ENCODE measurements at regions of chr15 and their contacts with region 1.

Region 1: DNA sequence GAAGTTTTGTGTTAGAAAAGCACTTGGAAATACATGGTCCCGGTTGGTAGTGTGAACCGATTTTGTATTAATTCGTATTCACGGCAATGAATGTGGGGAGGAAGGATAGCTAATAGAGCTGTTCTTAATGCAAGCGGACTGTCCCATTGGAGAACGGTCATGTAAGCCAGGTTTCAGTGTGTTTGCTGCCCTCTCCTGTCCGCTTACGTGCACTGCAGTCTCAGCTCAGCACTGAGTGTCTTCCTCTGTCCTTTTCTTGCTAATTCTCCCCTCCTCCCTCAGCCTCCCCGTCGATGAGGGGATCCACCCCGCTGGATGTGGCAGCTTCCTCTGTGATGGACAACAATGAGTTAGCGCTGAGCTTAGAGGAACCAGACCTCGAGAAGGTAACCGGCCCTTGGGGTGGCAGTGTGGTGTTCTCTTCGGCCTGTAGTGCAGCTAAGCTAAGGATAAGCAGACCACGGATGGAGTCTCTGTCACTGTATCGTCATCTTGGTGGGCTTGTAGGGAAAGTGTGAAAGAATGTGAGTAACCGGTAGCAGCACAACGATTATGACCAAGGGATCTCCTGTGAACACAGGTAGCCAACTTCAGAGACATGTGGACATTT is 267.5 kb upstream of the CHRM5 start:
- DNase-seq: peak; percentile 58 to 85
- ATAC-seq: peak; percentile 92 to 97
- H3K4me3 ChIP-seq: no peak overlapping the region
- H3K27ac ChIP-seq: no peak overlapping the region
- H3K4me1 ChIP-seq: no peaks in the 10 kb centered on the region
- CTCF ChIP-seq: peak; percentile 95
- EP300 ChIP-seq: no peak
- POLR2A ChIP-seq: no peak
- RAD21 ChIP-seq: peak; percentile 88 to 89

Region 2: GRCh38 chr15:33215941-33216872 is 484.6 kb before region 1 on chr15:
- CTCF ChIA-PET with region 1: interaction called, 14 read pairs
- POLR2A ChIA-PET with region 1: no interaction called
- DNase-seq: peak in 1 of 2 experiments; percentile 53
- ATAC-seq: peak; percentile 59 to 75; a peak in 4 of 6 replicates
- H3K4me3 ChIP-seq: no peak overlapping the region
- H3K27ac ChIP-seq: no peak overlapping the region
- H3K4me1 ChIP-seq: no peaks in the 10 kb centered on the region
- CTCF ChIP-seq: peak; percentile 72
- EP300 ChIP-seq: no peak
- POLR2A ChIP-seq: no peak
- RAD21 ChIP-seq: peak; percentile 30 to 47; a peak in 3 of 5 replicates

Region 3: DNA sequence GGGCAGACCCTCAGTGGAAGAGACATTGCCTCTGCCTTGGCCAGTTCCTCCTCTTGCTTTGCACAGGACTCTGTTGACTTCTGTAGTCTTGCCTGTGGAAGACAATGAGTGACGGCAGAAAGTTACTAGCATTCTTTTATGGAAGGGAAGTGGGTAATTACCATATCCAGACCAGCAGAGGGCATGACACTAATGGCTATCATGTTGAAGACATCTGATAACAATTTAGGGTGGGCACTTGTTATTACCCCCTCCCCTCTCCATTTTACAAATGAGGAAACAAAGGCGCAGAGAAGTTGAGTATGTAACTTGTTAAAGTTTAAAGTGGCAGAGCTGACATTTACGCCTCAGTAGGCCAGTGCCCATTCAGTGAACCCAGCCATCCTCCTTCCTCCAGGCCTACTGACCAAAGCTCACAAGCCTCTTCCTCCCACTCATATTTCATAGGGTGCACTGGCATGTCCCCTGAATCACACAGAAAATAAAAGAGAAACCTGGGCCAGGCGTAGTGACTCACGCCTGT is 458.1 kb before region 1 on chr15:
- CTCF ChIA-PET with region 1: interaction called, 99 read pairs
- POLR2A ChIA-PET with region 1: no interaction called
- DNase-seq: peak in 1 of 2 experiments; percentile 48
- ATAC-seq: peak in 1 of 2 experiments; percentile 42; a peak in 2 of 6 replicates
- H3K4me3 ChIP-seq: no peak overlapping the region
- H3K27ac ChIP-seq: peak overlapping the region; percentile 39 to 65; a peak in 5 of 6 replicates
- H3K4me1 ChIP-seq: peaks cover 39% of the 10 kb centered on the region
- CTCF ChIP-seq: peak; percentile 41
- EP300 ChIP-seq: no peak
- POLR2A ChIP-seq: no peak
- RAD21 ChIP-seq: peak; percentile 48 to 50; a peak in 3 of 5 replicates

Region 4: DNA sequence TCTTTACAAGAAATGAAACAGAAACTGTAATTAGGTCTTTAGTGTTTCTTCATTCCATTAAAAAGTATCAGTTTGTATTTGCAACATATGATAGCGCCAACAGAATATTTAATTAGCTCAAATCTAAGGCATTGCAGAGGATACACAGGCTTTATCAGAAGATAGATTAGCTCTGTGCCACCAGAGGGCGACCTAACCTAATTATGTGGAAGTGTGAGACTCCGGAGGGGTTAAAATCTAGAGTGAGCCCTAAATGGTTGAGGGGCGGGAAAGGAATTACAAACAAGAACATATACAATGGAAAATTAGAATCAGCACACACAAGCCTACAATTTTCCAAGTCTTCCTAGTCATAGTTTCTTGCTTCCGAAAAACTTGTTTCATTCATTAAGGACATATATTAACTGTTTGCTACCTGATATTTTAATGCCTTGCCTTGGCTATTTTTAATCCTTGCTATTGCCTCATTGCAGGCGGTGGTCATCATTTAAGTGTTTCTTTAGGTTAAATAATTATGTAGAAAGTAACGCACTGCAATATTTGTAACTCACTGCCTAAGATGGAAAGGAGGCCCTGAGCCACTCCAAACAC is 408.0 kb before region 1 on chr15:
- CTCF ChIA-PET with region 1: interaction called, 159 read pairs
- POLR2A ChIA-PET with region 1: interaction called, 7 read pairs
- DNase-seq: peak; percentile 59 to 74
- ATAC-seq: peak; percentile 84 to 95
- H3K4me3 ChIP-seq: no peak overlapping the region
- H3K27ac ChIP-seq: no peak overlapping the region
- H3K4me1 ChIP-seq: no peaks in the 10 kb centered on the region
- CTCF ChIP-seq: peak; percentile 92
- EP300 ChIP-seq: no peak
- POLR2A ChIP-seq: no peak
- RAD21 ChIP-seq: peak; percentile 88 to 89

Region 5: GRCh38 chr15:33341953-33342352 is 358.8 kb before region 1 on chr15:
- CTCF ChIA-PET with region 1: no interaction called
- POLR2A ChIA-PET with region 1: no interaction called
- DNase-seq: no peak
- ATAC-seq: no peak
- H3K4me3 ChIP-seq: no peak overlapping the region
- H3K27ac ChIP-seq: no peak overlapping the region
- H3K4me1 ChIP-seq: no peaks in the 10 kb centered on the region
- CTCF ChIP-seq: no peak
- EP300 ChIP-seq: no peak
- POLR2A ChIP-seq: no peak
- RAD21 ChIP-seq: no peak

Region 6: DNA sequence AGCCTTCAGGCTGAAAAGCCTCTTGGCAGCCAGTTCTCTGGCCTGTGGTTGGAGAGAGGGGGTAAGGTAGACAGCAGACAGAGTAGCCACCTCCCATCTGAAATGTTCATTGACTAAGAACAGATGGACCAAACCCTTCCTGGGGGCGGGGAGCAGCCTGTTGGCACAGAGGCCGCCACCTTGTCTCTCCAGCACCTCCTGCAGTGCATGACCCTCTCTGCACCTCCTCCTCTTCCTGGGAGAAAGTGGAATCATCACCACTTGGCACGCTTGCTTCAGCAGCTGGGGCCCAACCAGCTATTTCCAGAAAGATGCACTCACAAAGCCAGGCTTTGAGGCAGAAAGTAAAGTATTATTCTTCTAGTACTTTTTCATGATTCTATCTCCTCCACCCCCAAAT is 45.9 kb before region 1 on chr15:
- CTCF ChIA-PET with region 1: interaction called, 16 read pairs
- POLR2A ChIA-PET with region 1: no interaction called
- DNase-seq: no peak
- ATAC-seq: peak in 1 of 2 experiments; percentile 52; a peak in 3 of 6 replicates
- H3K4me3 ChIP-seq: no peak overlapping the region
- H3K27ac ChIP-seq: no peak overlapping the region
- H3K4me1 ChIP-seq: no peaks in the 10 kb centered on the region
- CTCF ChIP-seq: no peak
- EP300 ChIP-seq: no peak
- POLR2A ChIP-seq: no peak
- RAD21 ChIP-seq: no peak

Region 7: GRCh38 chr15:33722005-33722672 is 21.3 kb after region 1 on chr15:
- CTCF ChIA-PET with region 1: interaction called, 49 read pairs
- POLR2A ChIA-PET with region 1: no interaction called
- DNase-seq: peak in 1 of 2 experiments; percentile 35
- ATAC-seq: peak in 1 of 2 experiments; percentile 36; a peak in 1 of 6 replicates
- H3K4me3 ChIP-seq: no peak overlapping the region
- H3K27ac ChIP-seq: no peak overlapping the region
- H3K4me1 ChIP-seq: peaks cover 6% of the 10 kb centered on the region; the same call in 1 of the 3 replicates
- CTCF ChIP-seq: no peak
- EP300 ChIP-seq: no peak
- POLR2A ChIP-seq: no peak
- RAD21 ChIP-seq: no peak

Measured in A549 (cell line).